Head of caudate nucleus (tissue), 42 donors: ENCODE measurements at regions of chr11 and their contacts with region 1.

Region 1: DNA sequence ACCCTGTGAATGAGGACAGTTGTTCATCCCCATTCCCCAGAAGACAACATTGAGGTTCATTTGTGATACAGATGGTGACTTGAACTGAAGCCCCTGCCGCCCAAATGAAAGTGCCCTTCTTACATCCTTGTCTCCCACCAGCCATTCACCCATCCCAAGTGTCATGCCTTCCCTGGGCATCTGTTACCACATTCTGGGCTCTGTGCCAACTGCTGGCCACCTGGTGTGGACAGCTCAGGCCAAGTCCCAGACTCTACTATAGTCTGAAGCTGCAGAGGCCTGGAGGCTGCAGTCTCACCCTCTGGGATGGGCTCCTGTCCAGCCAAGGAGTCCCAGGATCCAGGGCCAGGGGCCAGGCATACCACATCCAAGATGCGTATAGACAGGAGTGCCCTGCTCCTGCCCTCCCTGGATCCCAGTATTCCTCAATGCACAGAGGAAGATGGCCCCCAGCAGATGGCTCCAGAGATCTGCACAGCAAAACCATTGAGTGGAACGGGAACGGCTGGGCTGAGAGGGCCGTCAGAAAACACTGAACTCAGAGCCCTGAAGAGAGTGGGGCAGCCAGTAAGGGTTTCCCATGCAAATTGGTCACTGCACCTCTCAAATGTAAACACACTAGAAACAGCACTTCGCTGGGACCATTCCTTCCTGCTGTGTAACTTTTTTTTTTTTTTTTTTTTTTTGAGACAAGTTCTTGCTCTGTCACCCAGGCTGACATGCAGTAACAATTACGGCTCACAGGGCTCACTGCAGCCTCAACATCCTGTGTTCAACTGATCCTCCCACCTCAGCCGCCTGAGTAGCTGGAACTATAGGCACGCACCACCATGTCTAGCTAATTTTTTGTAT is 22.8 kb downstream of the ARRB1 start:
- DNase-seq: peak; percentile 67 to 92 (median 82)

Region 2: DNA sequence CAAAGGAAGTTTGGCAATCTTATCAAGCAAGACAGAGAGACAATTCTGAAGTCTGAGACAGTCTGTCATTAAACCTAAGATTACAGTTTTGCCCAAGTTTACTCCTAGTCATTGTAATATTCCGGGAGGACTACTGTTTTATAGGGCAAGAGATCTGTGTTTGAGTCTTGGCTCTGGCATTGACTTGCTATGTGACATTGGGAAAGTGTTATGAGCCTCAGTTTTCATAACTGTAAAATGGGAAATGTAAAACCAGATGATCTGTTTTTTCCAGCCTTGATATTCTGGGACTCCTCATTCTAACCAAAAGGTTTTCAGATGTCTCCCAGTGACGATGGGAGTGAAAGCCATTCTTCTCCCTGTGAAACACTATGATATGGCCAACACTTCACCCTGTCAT is 202.1 kb before region 1 on chr11:
- intact Hi-C with region 1: no loop called
- DNase-seq: no peak

Region 3: DNA sequence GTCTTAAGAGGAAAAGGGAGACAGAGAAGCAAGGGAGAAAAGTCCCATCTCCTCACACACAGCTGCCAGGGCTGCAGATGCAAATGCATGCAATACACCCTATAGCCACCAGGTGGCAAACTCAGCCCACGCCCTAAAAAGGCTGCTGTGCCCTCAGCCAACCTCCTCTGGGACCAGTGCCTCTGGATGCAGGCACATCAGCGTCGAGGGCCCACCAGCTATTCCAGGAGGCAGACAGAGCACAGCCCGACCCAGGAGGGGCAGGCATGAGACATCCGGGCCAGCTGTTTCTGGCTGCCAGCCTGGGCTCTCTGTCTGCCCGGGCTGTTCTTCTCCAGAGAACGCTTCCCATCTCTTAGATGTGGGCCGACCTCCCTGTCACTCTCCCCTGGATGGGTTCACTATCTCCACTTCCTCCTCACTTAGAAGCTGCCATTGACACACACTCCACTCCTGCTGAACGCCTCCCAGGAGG is 48.4 kb before region 1 on chr11:
- intact Hi-C with region 1: loop called (anchors 5 kb)
- DNase-seq: peak; percentile 65 to 96 (median 88)

Region 4: GRCh38 chr11:75303544-75304224 is 25.0 kb before region 1 on chr11:
- intact Hi-C with region 1: no loop called
- DNase-seq: peak; percentile 35 to 91 (median 76)

Region 5: GRCh38 chr11:75388386-75389275 is 60.0 kb after region 1 on chr11:
- intact Hi-C with region 1: loop called (anchors 2 kb)
- DNase-seq: peak in 41 of 42 donors; percentile 12 to 88 (median 71)